Aorta (tissue), 5 donors: ENCODE measurements at regions of chr1 and their contacts with region 1.

Region 1: DNA sequence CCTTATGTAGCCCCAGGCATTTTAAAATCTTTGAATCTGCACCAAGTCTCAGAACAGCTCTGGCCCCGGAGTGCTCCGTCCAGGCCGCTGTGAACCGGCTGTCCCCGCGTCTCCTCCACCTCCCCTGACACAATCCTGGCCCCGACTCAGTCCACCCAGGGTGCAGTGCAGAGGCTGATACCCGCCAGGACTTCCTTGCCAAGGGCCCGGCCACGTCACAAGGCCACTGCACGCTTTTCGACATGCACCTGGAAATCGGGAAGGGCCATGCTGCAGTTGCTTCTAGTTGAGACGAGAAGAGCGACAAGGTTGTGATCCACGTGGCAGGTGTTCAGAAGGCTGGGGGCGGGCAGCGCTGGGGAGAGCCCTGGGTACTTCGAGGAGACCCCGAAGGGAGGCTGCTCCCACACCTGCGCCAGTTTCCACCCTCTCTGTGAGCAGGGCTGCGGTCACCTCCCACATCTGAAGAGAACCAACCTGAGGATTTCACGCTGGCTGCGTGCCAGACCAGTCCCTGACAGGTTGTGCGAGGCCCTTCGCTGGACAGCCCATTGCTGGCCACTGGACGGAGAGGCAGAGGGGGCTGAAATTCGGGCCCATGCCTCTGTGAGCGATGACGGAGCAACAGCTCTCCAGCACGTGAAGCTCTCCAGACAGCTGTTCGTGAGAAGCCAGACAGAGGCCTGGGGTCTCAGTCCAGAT is 6.7 kb downstream of the VWA1 start:
- DNase-seq: no peak
- ATAC-seq: no peak
- H3K4me3 ChIP-seq: no peak overlapping the region
- H3K27ac ChIP-seq: no peak overlapping the region
- H3K4me1 ChIP-seq: no peaks in the 10 kb centered on the region
- H3K27me3 ChIP-seq: no peaks in the 10 kb centered on the region

Region 2: GRCh38 chr1:1491601-1492000 is 49.4 kb after region 1 on chr1:
- intact Hi-C with region 1: loop called in 1 of 2 experiments (anchors 2 kb)
- DNase-seq: no peak
- ATAC-seq: no peak
- H3K4me3 ChIP-seq: no peak overlapping the region
- H3K27ac ChIP-seq: no peak overlapping the region
- H3K4me1 ChIP-seq: no peaks in the 10 kb centered on the region
- H3K27me3 ChIP-seq: no peaks in the 10 kb centered on the region